ENCODE measurements at regions of chr6 and their contacts with region 1.

Region 1: DNA sequence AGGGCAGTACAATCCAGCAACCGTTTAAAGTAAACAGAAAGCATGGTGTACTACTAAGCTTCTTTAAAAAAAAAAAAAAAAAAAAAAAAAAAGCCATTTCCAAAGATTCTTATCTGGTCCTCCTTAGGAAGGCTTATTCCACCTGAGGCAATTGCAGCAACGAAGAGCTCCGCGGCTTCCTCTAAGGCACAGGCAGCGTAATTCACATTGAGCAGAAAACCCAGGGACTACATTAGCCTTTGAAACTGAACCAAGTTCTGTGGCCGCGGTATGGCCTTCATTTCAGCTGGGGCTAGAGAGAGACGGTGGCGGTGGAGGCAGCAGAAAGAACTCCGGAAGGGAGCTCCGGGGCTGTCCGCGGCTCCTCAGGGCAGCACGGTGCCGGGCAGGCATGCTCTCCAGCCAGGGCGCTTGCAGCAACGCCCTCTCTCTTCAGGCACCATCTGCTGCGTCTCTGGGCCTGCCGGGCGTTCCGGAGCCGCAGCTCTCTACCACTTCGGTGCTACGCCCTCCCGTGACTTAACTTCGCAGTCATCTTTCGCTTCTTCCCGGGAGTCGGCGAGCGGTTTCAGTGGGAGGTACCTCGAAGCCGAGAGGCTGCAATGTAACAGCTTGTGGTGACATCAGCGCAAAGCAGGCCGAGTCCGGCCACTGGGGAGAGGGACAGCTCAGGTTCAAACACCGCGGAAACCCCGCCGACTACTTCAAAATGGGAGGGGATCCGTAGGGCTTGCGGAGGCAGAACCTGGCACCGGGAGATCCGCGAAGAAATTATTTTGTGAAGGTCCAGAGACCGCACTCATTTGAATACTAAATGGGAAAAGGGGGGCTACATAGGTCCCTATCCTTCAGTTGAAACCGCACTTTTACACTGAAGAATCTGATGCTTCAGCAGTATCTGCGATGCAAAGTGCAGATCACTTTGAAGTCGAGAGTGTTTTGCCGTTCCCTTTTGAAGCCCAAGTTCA is 100.0 kb downstream of the DST start:
- DNase-seq: peak; percentile 91
- ATAC-seq: peak; percentile 93
- H3K4me3 ChIP-seq: peak overlapping the region; percentile 73
- H3K27ac ChIP-seq: peak overlapping the region; percentile 70
- H3K4me1 ChIP-seq: peaks cover 13% of the 10 kb centered on the region; the same call in 1 of the 2 replicates
- H3K27me3 ChIP-seq: no peaks in the 10 kb centered on the region
- CTCF ChIP-seq: peak in 2 of 3 experiments; percentile 6 to 11; a peak in 2 of 6 replicates
- EP300 ChIP-seq: 0 out of 4 replicates have a peak, but pooled peaks of 1 of the 2 experiments have one; percentile 7
- POLR2A ChIP-seq: peak; percentile 90
- RAD21 ChIP-seq: no peak

Region 2: DNA sequence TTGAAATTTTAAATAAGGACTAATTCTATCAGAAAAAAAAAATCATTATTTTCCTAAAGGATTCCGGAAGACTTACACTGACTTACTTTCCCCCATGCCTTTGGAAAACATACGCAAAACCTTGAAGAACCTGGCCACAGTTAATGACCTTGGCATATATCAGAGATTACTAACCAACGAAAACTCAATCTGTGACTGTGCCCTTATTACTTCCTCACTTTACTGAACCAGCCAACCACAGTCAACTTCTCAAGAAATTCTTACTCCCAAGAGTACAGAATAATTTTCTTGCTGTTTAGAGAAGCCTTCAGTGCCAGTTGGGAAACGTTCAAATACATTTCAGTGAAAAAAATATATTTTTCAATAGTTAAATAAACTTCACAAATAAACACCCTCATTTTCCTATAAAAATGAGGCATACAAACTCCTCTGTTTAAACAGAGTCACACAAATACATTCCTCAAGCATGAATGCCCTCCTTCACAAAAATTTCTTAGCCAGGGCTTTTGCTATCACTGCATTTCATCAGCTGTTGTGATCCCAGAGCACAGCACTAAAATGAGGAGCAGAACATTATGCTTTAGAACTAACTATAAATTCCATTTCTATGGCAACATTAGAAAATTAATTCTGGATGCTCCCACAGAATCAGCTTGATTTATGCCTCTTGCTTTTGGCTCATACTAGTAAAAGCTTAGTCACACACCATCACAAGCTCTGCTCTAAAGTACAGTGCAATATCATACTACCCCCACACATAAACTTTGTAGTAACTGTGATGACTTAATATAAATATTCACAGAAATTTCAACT is 17.6 kb before region 1 on chr6:
- CTCF ChIA-PET with region 1: interaction called, 35 read pairs
- POLR2A ChIA-PET with region 1: interaction called, 15 read pairs
- RAD21 ChIA-PET with region 1: interaction called, 13 read pairs
- SMC1A ChIA-PET with region 1: interaction called, 30 read pairs
- in situ Hi-C with region 1: no loop called
- intact Hi-C with region 1: no loop called
- DNase-seq: no peak
- ATAC-seq: no peak
- H3K4me3 ChIP-seq: no peak overlapping the region
- H3K27ac ChIP-seq: no peak overlapping the region
- H3K4me1 ChIP-seq: no peaks in the 10 kb centered on the region
- H3K27me3 ChIP-seq: no peaks in the 10 kb centered on the region
- CTCF ChIP-seq: no peak
- EP300 ChIP-seq: no peak
- POLR2A ChIP-seq: no peak
- RAD21 ChIP-seq: no peak

Region 3: GRCh38 chr6:56555438-56555872 is 12.8 kb after region 1 on chr6:
- CTCF ChIA-PET with region 1: interaction called, 6 read pairs
- POLR2A ChIA-PET with region 1: interaction called, 5 read pairs
- RAD21 ChIA-PET with region 1: interaction called, 4 read pairs
- SMC1A ChIA-PET with region 1: interaction called, 14 read pairs
- in situ Hi-C with region 1: no loop called
- intact Hi-C with region 1: no loop called
- DNase-seq: no peak
- ATAC-seq: no peak
- H3K4me3 ChIP-seq: no peak overlapping the region
- H3K27ac ChIP-seq: no peak overlapping the region
- H3K4me1 ChIP-seq: 0 out of 2 replicates have a peak, but pooled peaks cover under 1% of the 10 kb centered on the region
- H3K27me3 ChIP-seq: no peaks in the 10 kb centered on the region
- CTCF ChIP-seq: no peak
- EP300 ChIP-seq: no peak
- POLR2A ChIP-seq: no peak
- RAD21 ChIP-seq: no peak